ENCODE measurements at regions of chr16 and their contacts with region 1.

Region 1: DNA sequence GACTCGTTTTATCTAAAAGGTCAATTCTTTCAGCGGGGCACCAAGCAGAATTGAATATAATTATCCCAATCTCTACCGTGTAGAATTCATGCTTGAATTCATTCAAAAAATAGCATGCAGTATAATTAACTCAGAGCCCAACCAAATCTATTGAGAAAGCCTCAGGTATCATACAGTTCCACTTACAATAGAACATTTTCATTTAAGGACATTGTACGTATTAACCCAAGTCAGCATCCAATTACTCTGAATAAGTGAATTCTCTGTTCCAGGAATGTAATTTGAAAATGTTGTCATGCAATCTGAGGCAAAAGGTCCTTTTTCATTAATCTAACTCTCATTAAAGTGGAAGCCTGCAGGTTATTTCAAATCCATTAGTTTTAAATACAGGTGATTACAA is 78.5 kb downstream of the SALL1 start:
- DNase-seq: no peak
- H3K4me3 ChIP-seq: no peak overlapping the region
- CTCF ChIP-seq: no peak

Region 2: GRCh38 chr16:51019617-51020016 is 53.0 kb before region 1 on chr16:
- in situ Hi-C with region 1: loop called (anchors 5 kb)
- DNase-seq: no peak
- H3K4me3 ChIP-seq: no peak overlapping the region
- CTCF ChIP-seq: no peak